Sciatic nerve (tissue), 2 donors: ENCODE measurements at regions of chr20 and their contacts with region 1.

Region 1: DNA sequence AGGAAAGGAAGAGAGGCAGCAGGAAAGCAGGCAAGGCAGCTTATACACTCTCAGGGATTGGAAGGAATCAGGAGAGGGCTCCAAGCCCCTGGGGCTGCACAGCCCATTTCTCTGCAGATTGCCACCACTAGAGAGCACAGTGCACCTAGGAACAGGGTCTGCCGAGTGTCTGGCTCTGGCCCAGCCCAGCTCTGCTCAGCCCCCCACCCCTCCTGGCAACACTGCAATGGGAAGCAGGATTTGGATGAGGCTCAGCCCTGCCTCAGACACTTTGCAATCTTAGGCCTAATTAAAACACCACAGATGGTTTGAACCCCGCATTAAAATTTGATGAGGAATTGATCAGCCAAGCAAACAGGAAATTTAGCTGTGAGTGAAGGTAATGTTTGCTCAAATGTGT is 252.7 kb downstream of the DHX35 start:
- DNase-seq: no peak
- ATAC-seq: no peak

Region 2: DNA sequence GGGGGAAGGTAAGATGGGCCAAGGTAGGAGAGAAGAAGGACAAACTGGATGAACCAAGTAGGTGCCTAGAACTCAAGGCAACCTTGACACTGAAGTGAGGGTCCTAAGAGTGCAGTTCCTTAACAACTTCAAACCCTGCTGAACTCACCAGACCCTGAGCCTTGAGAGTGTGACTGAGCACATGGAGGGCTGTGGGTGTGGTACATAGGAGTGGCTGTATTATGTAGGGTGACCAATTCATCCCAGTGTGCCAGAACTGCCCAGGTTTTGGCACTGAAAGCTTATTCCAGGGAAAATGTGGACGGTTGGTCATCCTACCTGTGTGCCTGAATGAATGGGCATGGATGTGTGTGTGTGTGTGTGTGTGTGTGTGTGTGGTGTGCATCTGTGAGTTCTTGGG is 29.1 kb after region 1 on chr20:
- intact Hi-C with region 1: loop called (anchors 1 kb)
- DNase-seq: no peak
- ATAC-seq: no peak